GM18951 (cell line): ENCODE measurements at regions of chr5 and their contacts with region 1.

Region 1: DNA sequence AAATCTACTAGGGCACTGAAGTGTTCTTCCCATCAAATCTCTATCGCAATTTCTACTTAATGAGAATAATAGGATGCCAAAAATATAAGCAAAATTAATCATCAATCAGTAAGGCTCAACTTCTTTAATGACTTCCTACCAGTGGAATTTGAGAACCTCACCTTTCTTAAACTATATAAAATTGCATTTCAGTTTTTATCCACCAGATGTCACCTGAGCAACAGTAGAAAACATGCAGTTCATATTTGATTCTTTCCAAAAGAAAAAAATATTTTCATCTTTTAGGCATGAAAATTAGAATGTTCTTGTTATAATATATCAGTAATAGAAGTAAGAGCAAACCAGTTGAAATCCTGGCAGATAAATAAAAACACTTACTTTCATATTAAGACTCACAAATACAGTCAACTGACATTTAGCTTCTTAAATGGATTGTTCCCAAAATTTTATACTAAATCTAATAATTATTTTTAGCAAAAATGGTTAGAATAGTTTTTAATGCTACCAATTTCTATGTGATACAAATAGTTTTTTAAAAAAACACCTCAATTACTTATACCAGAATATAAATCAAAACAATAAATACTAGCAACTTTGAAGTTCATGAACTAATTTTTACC is 13.4 kb upstream of the CCDC112 start:
- POLR2A ChIP-seq: no peak

Region 2: GRCh38 chr5:115033861-115034260 is 276.0 kb before region 1 on chr5:
- in situ Hi-C with region 1: no loop called
- POLR2A ChIP-seq: no peak

Region 3: DNA sequence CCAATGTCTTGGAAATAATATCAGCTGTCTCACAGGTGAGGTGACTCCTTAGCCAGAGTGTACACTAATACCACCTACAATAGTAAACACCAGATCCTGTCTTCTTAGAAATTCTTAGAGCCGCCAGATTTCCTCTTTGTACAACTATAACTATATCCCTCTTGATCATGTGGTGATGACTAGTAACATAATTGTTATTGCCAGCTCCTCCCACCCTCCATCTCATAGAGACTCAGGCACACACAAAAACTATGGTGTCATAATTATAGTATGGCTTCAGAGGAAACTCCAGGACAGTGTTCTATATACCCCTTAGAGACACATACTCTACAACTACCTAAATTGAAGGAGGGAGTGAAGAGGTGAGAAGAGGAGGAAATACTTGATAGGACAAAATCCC is 80.3 kb before region 1 on chr5:
- in situ Hi-C with region 1: no loop called
- POLR2A ChIP-seq: no peak

Region 4: GRCh38 chr5:115599497-115599896 is 289.6 kb after region 1 on chr5:
- in situ Hi-C with region 1: loop called (anchors 10 kb)
- POLR2A ChIP-seq: no peak

Region 5: GRCh38 chr5:116068028-116068632 is 758.3 kb after region 1 on chr5:
- in situ Hi-C with region 1: loop called (anchors 25 kb)
- POLR2A ChIP-seq: no peak